Posterior cingulate gyrus (tissue), 11 donors: ENCODE measurements at regions of chr12 and their contacts with region 1.

Region 1: DNA sequence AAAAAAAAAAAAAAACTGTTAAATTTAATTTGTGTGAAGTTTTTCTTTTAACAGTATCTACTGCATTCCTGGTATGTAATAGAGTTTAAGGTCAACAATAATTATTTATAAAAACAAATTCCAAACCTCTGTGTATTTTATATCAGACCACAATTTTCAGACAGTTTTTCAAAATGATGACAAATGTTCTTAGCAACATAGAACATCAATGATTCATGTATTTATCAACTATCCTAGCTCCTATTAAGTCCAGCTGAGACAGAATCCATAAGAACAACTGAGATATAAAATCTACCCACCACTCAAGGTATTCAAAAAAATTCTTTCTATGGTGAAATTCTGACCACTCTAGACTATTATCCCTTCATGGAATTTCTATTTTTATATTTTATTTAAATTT is 144.5 kb downstream of the EPS8 start:
- DNase-seq: no peak

Region 2: DNA sequence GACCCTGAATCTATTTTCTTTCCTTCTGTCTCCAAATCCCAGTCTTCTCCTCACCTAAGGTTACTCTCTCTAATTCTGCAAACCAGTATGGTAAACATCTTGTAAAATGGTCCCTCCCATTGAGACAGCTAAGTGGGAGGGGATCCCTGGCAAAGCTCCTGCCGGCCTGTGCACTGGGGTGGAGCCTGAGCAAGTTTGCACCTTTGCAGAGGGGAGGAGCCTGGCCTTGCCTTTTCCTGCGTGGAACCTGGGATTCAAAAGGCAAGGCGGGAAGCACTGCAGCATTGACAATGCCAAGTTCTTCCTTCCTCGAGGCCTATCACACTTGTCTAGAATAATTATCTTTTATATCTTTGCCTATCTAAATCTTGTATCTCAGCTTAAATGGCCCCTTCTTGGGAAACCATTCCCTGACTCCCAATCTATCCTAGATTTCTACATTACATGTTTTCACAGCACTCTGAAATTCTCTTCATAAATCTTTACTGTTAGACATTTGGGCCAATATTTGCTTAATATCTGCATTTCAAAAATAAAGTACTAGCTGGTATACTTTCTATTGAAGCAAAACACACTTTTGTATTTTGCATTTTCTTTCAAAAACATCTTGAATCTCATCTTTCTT is 61.5 kb after region 1 on chr12:
- intact Hi-C with region 1: loop called (anchors 5 kb)
- DNase-seq: peak in 1 of 10 donors; percentile 56

Region 3: DNA sequence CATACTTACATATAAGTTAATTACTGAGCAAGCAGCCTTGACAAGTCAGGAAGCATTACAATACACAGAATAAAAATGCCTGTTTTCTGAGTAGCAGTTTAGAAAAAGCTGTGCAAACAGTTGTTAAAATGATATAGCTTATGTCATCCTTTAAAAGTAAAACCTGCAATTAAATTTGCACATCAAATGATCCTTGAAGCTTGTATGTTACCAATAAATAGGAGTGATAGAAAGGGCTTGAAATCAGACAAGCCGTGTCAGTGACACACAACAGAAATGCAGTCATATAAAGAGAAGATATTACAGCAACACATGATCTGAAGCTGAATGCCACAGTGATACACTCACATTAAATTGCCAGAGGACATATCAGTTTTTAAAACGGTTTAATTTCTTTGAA is 74.5 kb after region 1 on chr12:
- intact Hi-C with region 1: no loop called
- DNase-seq: no peak

Region 4: GRCh38 chr12:15767301-15767700 is 122.6 kb after region 1 on chr12:
- intact Hi-C with region 1: no loop called
- DNase-seq: no peak